ENCODE measurements at regions of chr10 and their contacts with region 1.

Region 1: GRCh38 chr10:122879339-122880273 is at the start of gene FAM24B:
- DNase-seq: peak; percentile 96
- CTCF ChIP-seq: no peak

Region 2: GRCh38 chr10:122863216-122864193 is 16.1 kb before region 1 on chr10:
- CTCF ChIA-PET with region 1: interaction called, 13 read pairs
- POLR2A ChIA-PET with region 1: no interaction called
- DNase-seq: no peak
- CTCF ChIP-seq: no peak

Region 3: DNA sequence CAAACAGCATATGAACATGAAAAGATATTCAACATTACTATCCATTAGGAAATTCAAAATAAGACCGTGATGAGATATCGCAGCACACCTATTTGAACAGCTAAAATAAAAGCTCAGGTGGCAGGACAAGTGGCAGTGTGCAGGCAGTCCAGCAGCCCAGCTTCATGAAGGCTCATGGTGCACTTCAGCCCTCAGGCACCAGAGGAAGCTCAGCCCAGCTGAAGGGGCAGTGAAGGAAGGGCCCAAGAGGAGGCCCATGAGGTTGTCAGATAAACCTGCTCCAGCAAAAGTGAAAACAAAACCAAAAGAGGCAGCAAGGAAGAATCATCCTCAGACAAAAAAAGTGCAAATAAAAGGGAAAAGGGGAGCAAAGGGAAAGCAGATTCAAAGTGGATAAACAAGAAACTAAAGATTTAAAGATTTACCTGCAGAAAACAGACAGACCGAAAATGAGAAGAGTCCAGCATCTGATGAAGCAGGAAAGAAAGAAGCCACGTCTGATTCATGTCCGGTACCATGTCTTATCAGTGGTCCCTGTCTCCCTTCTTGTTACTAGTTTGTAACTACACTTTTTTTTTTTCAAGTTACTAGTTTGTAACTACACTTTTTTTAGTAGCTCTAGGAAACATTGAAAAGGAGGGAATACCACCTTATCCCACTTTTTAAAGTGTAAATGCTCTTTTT is 14.8 kb after region 1 on chr10:
- CTCF ChIA-PET with region 1: no interaction called
- POLR2A ChIA-PET with region 1: no interaction called
- DNase-seq: no peak
- CTCF ChIP-seq: no peak

Measured in GM10248 (cell line).